ENCODE measurements at regions of chr21 and their contacts with region 1.

Region 1: GRCh38 chr21:39715804-39716397 is 29.1 kb upstream of the IGSF5 start:
- DNase-seq: peak; percentile 48
- ATAC-seq: no peak
- H3K4me3 Mint-ChIP-seq: no peak overlapping the region
- H3K27ac Mint-ChIP-seq: no peak overlapping the region
- H3K4me1 Mint-ChIP-seq: no peaks in the 10 kb centered on the region
- H3K27me3 Mint-ChIP-seq: peaks cover 2% of the 10 kb centered on the region

Region 2: GRCh38 chr21:39518138-39518846 is 197.6 kb before region 1 on chr21:
- CTCF ChIA-PET with region 1: interaction called, 32 read pairs
- DNase-seq: peak; percentile 53
- ATAC-seq: peak; percentile 70
- H3K4me3 Mint-ChIP-seq: no peak overlapping the region
- H3K27ac Mint-ChIP-seq: no peak overlapping the region
- H3K4me1 Mint-ChIP-seq: no peaks in the 10 kb centered on the region
- H3K27me3 Mint-ChIP-seq: peaks cover 2% of the 10 kb centered on the region

Region 3: GRCh38 chr21:39754811-39755210 is 38.9 kb after region 1 on chr21:
- CTCF ChIA-PET with region 1: no interaction called
- DNase-seq: no peak
- ATAC-seq: no peak
- H3K4me3 Mint-ChIP-seq: no peak overlapping the region
- H3K27ac Mint-ChIP-seq: no peak overlapping the region
- H3K4me1 Mint-ChIP-seq: no peaks in the 10 kb centered on the region
- H3K27me3 Mint-ChIP-seq: no peaks in the 10 kb centered on the region

Region 4: DNA sequence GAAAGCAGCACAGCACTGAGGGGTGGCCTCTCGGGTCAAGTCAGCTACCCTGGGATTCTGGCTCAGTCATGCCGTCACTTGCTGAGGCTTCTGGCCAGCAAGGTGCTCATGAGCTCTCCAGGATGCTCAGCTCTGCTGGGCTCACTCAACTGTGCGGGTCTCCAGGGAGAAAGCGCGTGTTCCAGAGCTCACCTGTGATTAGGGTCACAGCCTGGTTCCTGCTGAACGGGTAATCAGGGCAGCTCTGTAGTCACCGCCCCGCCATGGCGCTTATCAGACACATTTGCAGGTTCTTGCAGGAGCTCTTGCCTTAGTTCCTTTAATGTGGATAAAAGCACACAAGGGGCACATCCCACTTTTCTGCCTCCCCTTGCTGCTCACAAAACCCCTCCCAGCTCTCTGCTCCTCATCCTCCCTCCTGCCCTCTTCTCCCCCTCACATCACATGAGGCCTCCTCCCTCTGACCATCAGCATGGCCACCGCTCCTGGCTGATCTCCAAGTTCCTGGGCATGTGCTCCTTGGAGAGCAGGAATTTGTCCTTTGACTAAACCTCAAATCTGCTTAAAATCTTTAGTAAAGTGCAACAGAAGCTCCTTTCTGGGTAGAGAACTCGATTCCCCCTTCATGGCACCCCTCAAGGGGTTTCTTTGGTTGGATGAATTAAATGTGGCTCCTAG is 153.4 kb after region 1 on chr21:
- CTCF ChIA-PET with region 1: no interaction called
- DNase-seq: no peak
- ATAC-seq: no peak
- H3K4me3 Mint-ChIP-seq: no peak overlapping the region
- H3K27ac Mint-ChIP-seq: no peak overlapping the region
- H3K4me1 Mint-ChIP-seq: no peaks in the 10 kb centered on the region
- H3K27me3 Mint-ChIP-seq: no peaks in the 10 kb centered on the region

Measured in activated CD8-positive, alpha-beta memory T cell treated with anti-CD3 and anti-CD28 coated beads, Interleukin-2, amount 10 ng/mL, durations not matched to agents 7 days and 5 days (primary cell).